KBM-7 (cell line): ENCODE measurements at regions of chr15 and their contacts with region 1.

Region 1: DNA sequence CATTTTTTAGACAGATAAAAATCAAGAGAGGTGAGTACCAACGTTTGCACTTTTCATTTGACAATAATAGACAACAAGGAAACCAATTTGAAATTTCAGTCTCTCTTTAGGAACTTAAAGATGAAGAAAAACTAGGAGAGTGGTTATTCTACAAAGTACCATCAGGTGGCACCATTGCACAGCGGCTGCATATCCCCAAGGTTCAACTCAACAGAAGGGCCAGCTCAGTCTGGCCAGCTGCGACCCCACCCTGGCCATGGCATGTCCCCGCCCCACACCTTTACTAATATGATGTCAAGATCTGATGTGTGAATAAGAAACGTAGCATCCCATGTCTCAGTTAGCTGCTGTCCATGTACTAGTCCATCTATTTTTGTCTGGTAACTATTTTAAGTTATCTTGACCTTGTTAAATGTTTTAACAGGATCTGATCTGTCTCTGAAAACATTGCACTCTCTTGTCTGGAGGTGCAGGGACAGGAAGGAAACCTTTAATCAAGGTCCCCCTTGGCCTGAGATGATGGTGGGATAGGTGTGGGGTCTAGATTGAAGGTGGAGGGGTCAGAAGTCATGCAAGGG is 35.5 kb upstream of the CGNL1 start:
- DNase-seq: peak; percentile 65

Region 2: GRCh38 chr15:57485869-57486268 is 145.1 kb after region 1 on chr15:
- in situ Hi-C with region 1: no loop called
- DNase-seq: no peak

Region 3: DNA sequence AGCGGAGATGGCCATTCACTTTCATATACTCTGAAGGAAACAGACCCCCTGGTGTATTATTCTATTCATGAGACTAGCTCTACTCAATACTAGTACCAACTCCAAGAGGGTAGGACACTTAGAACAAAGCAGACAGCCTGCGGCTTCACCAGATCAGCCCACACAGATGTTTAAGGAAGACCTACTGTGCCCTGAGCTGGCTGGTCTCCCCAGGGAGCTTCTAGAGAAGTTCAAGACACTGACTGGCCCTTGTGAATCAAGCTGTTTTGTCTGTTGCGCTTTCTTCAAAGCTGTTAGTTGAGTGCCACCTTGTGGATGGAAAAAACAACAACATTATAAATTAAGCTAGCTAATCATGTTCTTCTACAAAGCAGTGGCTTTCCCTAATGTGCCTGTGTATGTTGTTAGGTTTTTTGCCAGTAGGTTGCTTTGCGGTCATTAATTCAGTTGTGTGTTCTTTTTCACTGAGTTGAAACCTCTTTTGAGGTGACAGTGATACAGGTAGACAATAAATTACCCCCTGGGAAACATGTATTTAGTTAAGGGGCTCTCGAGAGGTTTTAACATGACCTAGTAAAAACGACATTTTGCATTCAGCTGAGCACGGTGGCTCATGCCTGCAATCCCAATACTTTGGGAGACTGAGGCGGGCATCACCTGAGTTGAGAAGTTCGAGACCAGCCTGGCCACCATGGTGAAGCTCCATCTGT is 186.8 kb after region 1 on chr15:
- in situ Hi-C with region 1: loop called (anchors 10 kb)
- DNase-seq: peak; percentile 78